Transverse colon (tissue), 4 donors: ENCODE measurements at regions of chr17 and their contacts with region 1.

Region 1: GRCh38 chr17:57892146-57892828 is 42.4 kb upstream of the MRPS23 start:
- DNase-seq: peak; percentile 91
- H3K4me3 ChIP-seq: no peak overlapping the region
- H3K27ac ChIP-seq: peak overlapping the region; percentile 88 to 98 (median 92)
- H3K4me1 ChIP-seq: peaks cover 45 to 75% (median 57%) of the 10 kb centered on the region in 4 donors
- H3K27me3 ChIP-seq: no peaks in the 10 kb centered on the region
- CTCF ChIP-seq: peak; percentile 97 to 99 (median 99)
- EP300 ChIP-seq: no peak
- POLR2A ChIP-seq: no peak

Region 2: DNA sequence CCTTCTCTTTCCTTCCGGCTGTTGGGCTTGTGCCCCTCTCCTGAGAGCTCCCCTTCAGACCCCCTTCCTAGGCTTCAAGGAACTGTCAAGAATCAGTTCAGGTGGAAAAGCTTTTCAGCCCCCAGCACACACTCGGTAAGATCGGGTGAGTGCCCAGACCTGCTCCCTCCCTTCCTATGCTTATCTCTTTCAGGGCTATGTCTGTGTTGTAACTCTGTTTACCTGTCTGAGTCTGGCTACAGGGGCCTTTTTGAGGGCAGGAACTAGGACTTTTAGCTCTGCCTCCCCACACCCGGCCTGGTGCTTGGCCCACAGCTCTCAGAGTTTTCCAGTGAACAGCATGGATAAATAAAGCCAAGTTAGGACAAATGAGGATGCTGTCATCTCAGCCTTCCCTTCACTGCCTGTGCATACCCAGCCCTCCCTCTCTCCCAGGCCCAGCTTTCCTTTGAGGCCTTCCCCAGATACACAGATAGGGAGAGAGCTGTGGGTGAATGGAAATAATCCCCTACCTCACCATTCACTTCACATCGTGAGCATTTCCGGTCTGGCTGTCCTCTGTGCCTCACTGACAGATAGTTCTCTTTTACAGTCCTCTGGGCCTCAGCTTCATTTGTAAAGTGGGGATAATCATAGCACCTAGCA is 36.8 kb before region 1 on chr17:
- in situ Hi-C with region 1: no loop called
- intact Hi-C with region 1: loop called (anchors 5 kb)
- DNase-seq: no peak
- H3K4me3 ChIP-seq: no peak overlapping the region
- H3K27ac ChIP-seq: peak overlapping the region in 2 of 4 donors; percentile 31 to 90
- H3K4me1 ChIP-seq: peaks cover 12 to 39% (median 21%) of the 10 kb centered on the region in 4 donors
- H3K27me3 ChIP-seq: no peaks in the 10 kb centered on the region
- CTCF ChIP-seq: no peak
- EP300 ChIP-seq: no peak
- POLR2A ChIP-seq: no peak

Region 3: DNA sequence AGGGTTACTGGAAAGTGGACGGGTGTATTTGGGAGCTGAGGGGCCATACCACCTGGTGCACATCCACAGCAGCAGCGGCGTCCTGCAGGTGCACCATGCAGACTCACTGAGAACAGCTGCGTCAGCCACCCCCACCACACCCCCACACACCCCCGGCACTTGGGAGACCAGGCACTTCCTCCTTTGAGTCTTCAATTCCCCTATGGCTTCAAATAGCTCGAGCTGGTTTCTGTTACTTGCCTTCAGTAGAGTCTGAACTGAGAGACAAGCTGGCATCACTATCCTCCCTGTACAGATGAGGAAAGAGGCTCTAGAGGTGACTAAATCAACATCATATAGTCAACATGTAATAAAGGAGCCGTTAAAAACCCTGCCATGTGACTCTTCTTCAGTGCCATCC is 47.5 kb after region 1 on chr17:
- in situ Hi-C with region 1: no loop called
- intact Hi-C with region 1: loop called (anchors 5 kb)
- DNase-seq: peak; percentile 66
- H3K4me3 ChIP-seq: no peak overlapping the region
- H3K27ac ChIP-seq: peak overlapping the region; percentile 91 to 99 (median 97)
- H3K4me1 ChIP-seq: peaks cover 60 to 94% (median 79%) of the 10 kb centered on the region in 4 donors
- H3K27me3 ChIP-seq: no peaks in the 10 kb centered on the region
- CTCF ChIP-seq: no peak
- EP300 ChIP-seq: no peak
- POLR2A ChIP-seq: no peak

Region 4: DNA sequence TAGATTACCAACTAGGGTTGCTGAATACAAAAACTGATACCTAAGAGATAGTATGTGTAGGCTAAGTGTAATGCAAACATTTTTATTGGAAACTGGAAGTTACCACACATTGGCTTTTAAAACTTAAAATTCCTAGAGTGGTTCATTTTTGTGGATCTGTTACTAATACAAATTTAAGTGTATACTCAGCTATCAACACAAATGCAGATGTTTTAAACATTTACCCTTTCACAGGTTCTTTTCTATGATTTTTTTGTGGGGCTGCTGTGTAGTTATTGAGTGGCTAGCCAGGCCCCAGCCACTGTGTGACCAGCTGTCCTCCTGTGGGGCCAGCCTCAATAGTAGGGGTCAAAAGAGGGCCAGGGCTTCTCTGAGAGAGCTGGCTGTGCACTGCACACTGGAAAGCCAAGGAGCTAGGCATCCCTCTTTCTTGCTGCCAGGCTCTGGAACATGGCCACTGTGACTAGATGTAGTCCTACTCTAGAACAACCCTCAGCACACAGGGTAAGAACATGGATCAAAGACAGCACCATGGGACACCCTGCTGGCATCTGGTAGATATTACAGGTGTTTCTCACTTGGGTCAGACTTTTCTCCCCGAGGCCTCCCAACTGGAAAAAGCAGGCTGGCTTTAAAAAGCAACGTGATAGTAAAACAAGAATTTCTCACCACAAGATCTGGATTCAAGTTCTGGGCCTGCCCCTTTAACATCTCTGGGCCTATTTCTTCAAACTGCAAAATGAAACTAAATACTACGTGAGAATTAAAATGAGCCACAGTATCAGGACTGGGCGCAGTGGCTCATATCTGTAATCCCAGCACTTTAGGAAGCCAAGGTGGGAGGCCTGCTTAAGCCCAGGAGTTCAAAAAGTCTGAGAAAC is 103.0 kb after region 1 on chr17:
- in situ Hi-C with region 1: loop called in 1 of 4 experiments (anchors 5 kb)
- intact Hi-C with region 1: no loop called
- DNase-seq: peak; percentile 66
- H3K4me3 ChIP-seq: no peak overlapping the region
- H3K27ac ChIP-seq: peak overlapping the region; percentile 49 to 73 (median 52)
- H3K4me1 ChIP-seq: peaks cover 7 to 34% (median 16%) of the 10 kb centered on the region in 4 donors
- H3K27me3 ChIP-seq: no peaks in the 10 kb centered on the region
- CTCF ChIP-seq: peak; percentile 60 to 90 (median 71)
- EP300 ChIP-seq: no peak
- POLR2A ChIP-seq: peak; percentile 25

Region 5: GRCh38 chr17:58156839-58157803 is 264.8 kb after region 1 on chr17:
- in situ Hi-C with region 1: no loop called
- intact Hi-C with region 1: no loop called
- DNase-seq: peak; percentile 12
- H3K4me3 ChIP-seq: peak overlapping the region; percentile 9 to 52 (median 20)
- H3K27ac ChIP-seq: no peak overlapping the region
- H3K4me1 ChIP-seq: peaks cover 3 to 10% (median 7%) of the 10 kb centered on the region in 4 donors
- H3K27me3 ChIP-seq: peaks cover 85% of the 10 kb centered on the region
- CTCF ChIP-seq: no peak
- EP300 ChIP-seq: no peak
- POLR2A ChIP-seq: no peak